Endothelial cell of umbilical vein (primary cell): ENCODE measurements at regions of chr6 and their contacts with region 1.

Region 1: DNA sequence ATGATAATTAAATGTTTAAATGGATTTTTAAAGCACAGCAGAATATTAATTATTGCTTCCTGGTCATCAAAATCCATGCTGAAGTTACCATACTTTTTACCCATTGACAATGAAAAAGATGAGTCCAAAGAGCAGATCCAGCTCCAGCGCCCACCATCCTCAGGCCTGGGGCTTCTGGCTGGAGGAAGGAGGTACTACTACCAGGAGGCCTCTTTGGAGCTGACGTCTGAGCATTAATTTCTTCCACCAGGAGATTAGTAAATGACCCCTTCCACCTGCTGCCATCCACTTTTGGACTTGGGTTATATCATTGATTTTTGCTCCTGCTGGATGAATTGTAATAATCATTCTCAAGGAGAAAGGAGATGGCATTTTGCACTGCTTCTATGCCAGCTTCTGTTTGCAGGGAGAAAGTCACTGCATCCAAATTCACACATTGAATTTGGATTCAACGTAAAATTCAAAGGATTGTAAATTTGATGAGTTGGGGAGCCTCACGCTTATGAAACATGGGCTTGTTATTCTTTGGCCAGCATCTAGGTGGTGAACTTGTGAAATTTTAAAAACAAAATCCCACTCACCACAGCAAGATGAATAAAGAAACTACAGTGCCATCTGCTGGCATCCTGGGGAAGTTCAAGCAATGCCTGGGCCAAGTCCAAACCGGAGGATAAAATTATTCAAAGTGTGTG is 121.8 kb downstream of the SASH1 start:
- DNase-seq: peak; percentile 86
- H3K4me3 ChIP-seq: no peak overlapping the region
- H3K27ac ChIP-seq: peak overlapping the region; percentile 42
- H3K4me1 ChIP-seq: peaks cover 37% of the 10 kb centered on the region
- H3K27me3 ChIP-seq: no peaks in the 10 kb centered on the region
- CTCF ChIP-seq: peak; percentile 76 to 94
- POLR2A ChIP-seq: no peak

Region 2: DNA sequence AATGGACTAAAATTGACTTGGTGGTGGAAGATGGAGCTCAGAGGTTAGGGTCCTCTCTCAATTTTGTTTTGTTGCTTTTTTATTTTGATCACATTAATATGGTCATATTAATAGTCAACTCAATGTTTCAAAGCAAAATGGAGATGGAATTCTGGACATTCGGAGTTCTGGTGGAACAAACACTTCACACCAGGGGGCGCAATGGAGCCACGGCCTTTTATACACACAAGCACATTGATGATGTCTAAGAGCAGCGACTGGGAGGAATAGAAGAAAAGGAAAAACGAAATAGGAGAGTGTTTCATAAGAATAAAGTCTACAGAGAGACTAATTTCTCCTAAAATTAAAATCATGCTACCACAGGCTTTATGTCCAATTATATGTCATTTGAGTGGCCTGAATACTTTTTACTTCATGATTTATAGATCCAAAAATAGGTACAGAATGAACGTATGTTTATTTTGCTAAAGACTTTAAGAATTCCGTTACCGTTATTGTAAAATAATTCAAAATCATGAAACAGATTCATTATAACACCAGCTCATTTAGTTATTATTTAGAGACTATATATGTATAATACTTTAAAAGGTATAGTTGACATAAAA is 319.4 kb before region 1 on chr6:
- CTCF ChIA-PET with region 1: no interaction called
- POLR2A ChIA-PET with region 1: no interaction called
- dilution Hi-C with region 1: no loop called
- intact Hi-C with region 1: loop called (anchors 1 kb)
- DNase-seq: peak; percentile 74
- H3K4me3 ChIP-seq: no peak overlapping the region
- H3K27ac ChIP-seq: peak overlapping the region; percentile 99
- H3K4me1 ChIP-seq: peaks cover 41% of the 10 kb centered on the region
- H3K27me3 ChIP-seq: no peaks in the 10 kb centered on the region
- CTCF ChIP-seq: peak; percentile 75 to 81
- POLR2A ChIP-seq: no peak

Region 3: DNA sequence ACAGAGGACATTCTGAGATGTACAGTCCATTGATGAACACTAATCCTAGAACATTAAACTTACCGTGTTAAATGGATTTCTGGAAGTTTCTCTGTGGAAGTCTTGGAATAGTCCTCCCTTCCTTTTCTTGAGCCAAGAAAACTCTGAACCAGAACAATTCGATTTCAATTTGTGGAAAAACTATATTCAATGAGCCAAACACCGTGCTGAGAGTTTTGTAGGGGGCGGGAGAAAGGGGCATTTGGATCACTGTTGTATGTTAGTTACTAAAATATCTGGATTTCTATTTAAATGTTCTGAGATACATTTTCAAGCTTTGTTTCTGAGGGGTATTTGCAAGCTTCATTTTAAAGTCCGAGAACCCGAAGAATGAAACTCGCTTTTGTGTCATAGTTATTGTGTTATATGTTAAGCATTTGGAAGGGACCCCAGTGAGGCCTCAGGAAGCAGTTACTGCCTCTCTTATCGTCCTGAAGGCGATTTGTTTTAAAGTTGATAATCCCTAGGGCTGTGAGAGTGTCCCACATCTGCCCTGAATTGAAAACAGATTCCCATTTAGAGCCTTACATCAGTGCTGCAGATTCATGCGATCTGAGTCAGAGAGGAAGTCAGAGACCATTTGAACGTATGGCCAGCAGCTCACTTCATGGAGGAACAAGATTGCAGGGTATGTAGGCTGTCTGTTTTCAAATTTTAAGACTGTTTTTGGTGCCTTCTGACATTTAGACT is 192.6 kb before region 1 on chr6:
- CTCF ChIA-PET with region 1: interaction called, 3 read pairs
- POLR2A ChIA-PET with region 1: no interaction called
- dilution Hi-C with region 1: no loop called
- intact Hi-C with region 1: loop called (anchors 2 kb)
- DNase-seq: peak; percentile 89
- H3K4me3 ChIP-seq: peak overlapping the region in 1 of 3 experiments; percentile 45
- H3K27ac ChIP-seq: peak overlapping the region; percentile 93
- H3K4me1 ChIP-seq: peaks cover 47% of the 10 kb centered on the region
- H3K27me3 ChIP-seq: no peaks in the 10 kb centered on the region
- CTCF ChIP-seq: no peak
- POLR2A ChIP-seq: peak; percentile 33

Region 4: GRCh38 chr6:148398244-148398643 is 66.2 kb before region 1 on chr6:
- CTCF ChIA-PET with region 1: interaction called, 6 read pairs
- POLR2A ChIA-PET with region 1: no interaction called
- dilution Hi-C with region 1: no loop called
- intact Hi-C with region 1: loop called (anchors 1 kb)
- DNase-seq: peak; percentile 95
- H3K4me3 ChIP-seq: peak overlapping the region in 1 of 3 experiments; percentile 3
- H3K27ac ChIP-seq: peak overlapping the region; percentile 98
- H3K4me1 ChIP-seq: peaks cover 41% of the 10 kb centered on the region
- H3K27me3 ChIP-seq: no peaks in the 10 kb centered on the region
- CTCF ChIP-seq: no peak
- POLR2A ChIP-seq: peak; percentile 52

Region 5: GRCh38 chr6:148451690-148452089 is 12.8 kb before region 1 on chr6:
- CTCF ChIA-PET with region 1: interaction called, 3 read pairs
- POLR2A ChIA-PET with region 1: no interaction called
- dilution Hi-C with region 1: no loop called
- intact Hi-C with region 1: loop called (anchors 1 kb)
- DNase-seq: no peak
- H3K4me3 ChIP-seq: no peak overlapping the region
- H3K27ac ChIP-seq: peak overlapping the region; percentile 61
- H3K4me1 ChIP-seq: peaks cover 85% of the 10 kb centered on the region
- H3K27me3 ChIP-seq: no peaks in the 10 kb centered on the region
- CTCF ChIP-seq: no peak
- POLR2A ChIP-seq: peak; percentile 37